ENCODE measurements at regions of chr1 and their contacts with region 1.

Region 1: GRCh38 chr1:39026051-39026865 is at the start of gene NDUFS5:
- DNase-seq: peak; percentile 88
- ATAC-seq: peak; percentile 91
- H3K4me3 ChIP-seq: peak within 1 kb of the TSS; percentile 85 to 98 (median 98)
- H3K4me3 Mint-ChIP-seq: peak within 1 kb of the TSS; percentile 89
- H3K27ac ChIP-seq: peak within 1 kb of the TSS; percentile 88 to 92
- H3K27ac Mint-ChIP-seq: peak within 1 kb of the TSS; percentile 86
- H3K4me1 ChIP-seq: peaks cover 10 to 16% of the 10 kb centered on the region in 2 donors
- H3K4me1 Mint-ChIP-seq: peaks cover 20% of the 10 kb centered on the region
- H3K27me3 ChIP-seq: no peaks in the 10 kb centered on the region
- H3K27me3 Mint-ChIP-seq: no peaks in the 10 kb centered on the region
- CTCF ChIP-seq: no peak
- total RNA-seq, gene NDUFS5: 47.2 and 55.8 TPM in 2 replicates

Region 2: GRCh38 chr1:38990738-38991639 is 35.3 kb before region 1 on chr1 and contains the start of gene AKIRIN1:
- CTCF ChIA-PET with region 1: no interaction called
- POLR2A ChIA-PET with region 1: no interaction called
- intact Hi-C with region 1: loop called (anchors 1 kb)
- DNase-seq: peak; percentile 96
- ATAC-seq: peak; percentile 92
- H3K4me3 ChIP-seq: peak within 1 kb of the TSS; percentile 58 to 89 (median 80)
- H3K4me3 Mint-ChIP-seq: peak within 1 kb of the TSS; percentile 89
- H3K27ac ChIP-seq: peak within 1 kb of the TSS; percentile 86 to 95
- H3K27ac Mint-ChIP-seq: peak within 1 kb of the TSS; percentile 89
- H3K4me1 ChIP-seq: peaks cover 19 to 22% of the 10 kb centered on the region in 2 donors
- H3K4me1 Mint-ChIP-seq: peaks cover 30% of the 10 kb centered on the region
- H3K27me3 ChIP-seq: peaks cover 0 to under 1% (median 0%) of the 10 kb centered on the region in 4 experiments
- H3K27me3 Mint-ChIP-seq: peaks cover 3% of the 10 kb centered on the region
- CTCF ChIP-seq: no peak
- total RNA-seq, gene AKIRIN1: 59.7 and 61.9 TPM in 2 replicates

Region 3: GRCh38 chr1:39065542-39065941 is 39.3 kb after region 1 on chr1:
- CTCF ChIA-PET with region 1: no interaction called
- POLR2A ChIA-PET with region 1: no interaction called
- intact Hi-C with region 1: no loop called
- DNase-seq: no peak
- ATAC-seq: no peak
- H3K4me3 ChIP-seq: no peak overlapping the region
- H3K4me3 Mint-ChIP-seq: no peak overlapping the region
- H3K27ac ChIP-seq: no peak overlapping the region
- H3K27ac Mint-ChIP-seq: no peak overlapping the region
- H3K4me1 ChIP-seq: no peaks in the 10 kb centered on the region
- H3K4me1 Mint-ChIP-seq: peaks cover 4% of the 10 kb centered on the region
- H3K27me3 ChIP-seq: no peaks in the 10 kb centered on the region
- H3K27me3 Mint-ChIP-seq: no peaks in the 10 kb centered on the region
- CTCF ChIP-seq: no peak

Measured in B cell (primary cell).